Ovary (tissue), 10 donors: ENCODE measurements at regions of chr3 and their contacts with region 1.

Region 1: DNA sequence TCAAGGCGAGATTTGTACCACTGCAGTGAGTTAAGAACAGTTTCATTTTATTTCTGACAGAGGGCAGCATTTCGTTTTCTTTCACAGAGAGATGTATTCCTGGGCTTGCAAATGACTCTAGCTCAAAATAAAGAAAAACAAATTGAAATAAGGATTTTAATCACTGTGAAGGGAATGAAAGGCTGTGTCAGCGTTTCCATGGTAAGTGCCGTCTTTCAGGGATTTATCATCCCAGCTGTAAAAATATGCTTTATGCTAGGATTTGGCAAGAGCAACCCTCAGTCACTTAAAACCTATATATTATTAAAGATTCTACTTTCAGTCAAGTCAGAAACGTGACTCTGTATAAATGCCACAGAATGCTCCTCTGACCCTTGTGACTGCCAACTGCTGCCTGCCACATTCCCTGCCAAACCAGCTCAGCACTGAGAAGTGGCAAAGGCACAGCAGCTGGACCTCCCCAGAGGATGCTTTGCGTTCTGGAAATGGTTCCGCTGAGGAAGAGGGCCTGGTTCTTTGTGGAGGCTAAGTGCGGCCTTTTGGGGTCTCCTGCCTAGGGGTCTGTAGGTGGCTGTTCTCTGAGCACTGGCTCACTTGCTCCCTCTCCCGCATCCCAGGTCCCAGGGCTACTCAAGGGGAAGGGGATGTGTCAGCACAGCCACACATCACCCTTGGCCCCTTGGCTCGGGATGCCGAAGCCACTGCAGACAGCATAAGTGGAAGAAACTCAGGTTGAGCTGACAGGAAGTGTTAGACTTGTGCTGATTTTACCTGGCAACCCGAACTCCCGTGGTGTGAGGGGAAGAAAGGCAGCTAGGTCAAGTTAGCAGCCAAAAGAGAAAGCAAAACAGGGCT is 56.6 kb upstream of the POMGNT2 start:
- DNase-seq: no peak
- H3K4me3 ChIP-seq: no peak overlapping the region
- H3K27ac ChIP-seq: no peak overlapping the region
- H3K4me1 ChIP-seq: no peaks in the 10 kb centered on the region
- H3K27me3 ChIP-seq: no peaks in the 10 kb centered on the region
- CTCF ChIP-seq: no peak
- EP300 ChIP-seq: no peak
- POLR2A ChIP-seq: no peak

Region 2: GRCh38 chr3:43448098-43448497 is 285.6 kb after region 1 on chr3:
- intact Hi-C with region 1: no loop called
- DNase-seq: no peak
- H3K4me3 ChIP-seq: no peak overlapping the region
- H3K27ac ChIP-seq: no peak overlapping the region
- H3K4me1 ChIP-seq: no peaks in the 10 kb centered on the region
- H3K27me3 ChIP-seq: no peaks in the 10 kb centered on the region
- CTCF ChIP-seq: no peak
- EP300 ChIP-seq: no peak
- POLR2A ChIP-seq: no peak

Region 3: DNA sequence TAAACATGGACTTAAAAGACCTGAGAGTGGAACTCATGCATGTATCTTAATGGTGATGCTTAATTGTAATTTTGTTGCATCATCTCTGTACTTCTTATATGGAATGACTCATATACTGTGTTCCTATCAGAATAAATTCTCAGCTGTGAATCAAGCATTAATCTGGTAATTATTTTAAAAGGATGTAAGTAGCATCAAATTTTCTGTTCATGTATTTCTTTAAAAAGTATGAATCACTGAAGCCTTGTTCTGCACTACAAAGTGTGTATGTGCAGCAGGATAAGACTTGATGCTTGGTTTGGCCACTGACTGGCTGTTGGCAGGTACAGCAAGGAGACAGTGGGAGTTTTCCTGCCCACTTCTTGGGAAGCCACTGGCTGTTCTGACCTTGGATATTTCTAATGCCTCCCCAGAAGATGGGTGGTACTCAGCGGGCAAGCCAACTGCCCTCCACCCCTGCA is 335.5 kb after region 1 on chr3:
- intact Hi-C with region 1: loop called in 2 of 4 experiments (anchors 10 kb)
- DNase-seq: no peak
- H3K4me3 ChIP-seq: no peak overlapping the region
- H3K27ac ChIP-seq: no peak overlapping the region
- H3K4me1 ChIP-seq: no peaks in the 10 kb centered on the region
- H3K27me3 ChIP-seq: no peaks in the 10 kb centered on the region
- CTCF ChIP-seq: no peak
- EP300 ChIP-seq: no peak
- POLR2A ChIP-seq: no peak

Region 4: GRCh38 chr3:43503067-43503728 is 340.7 kb after region 1 on chr3:
- intact Hi-C with region 1: loop called in 2 of 4 experiments (anchors 10 kb)
- DNase-seq: no peak
- H3K4me3 ChIP-seq: no peak overlapping the region
- H3K27ac ChIP-seq: no peak overlapping the region
- H3K4me1 ChIP-seq: no peaks in the 10 kb centered on the region
- H3K27me3 ChIP-seq: no peaks in the 10 kb centered on the region
- CTCF ChIP-seq: no peak
- EP300 ChIP-seq: no peak
- POLR2A ChIP-seq: no peak